ENCODE measurements at regions of chr6 and their contacts with region 1.

Region 1: GRCh38 chr6:36623547-36624459 is 29.6 kb downstream of the SRSF3 start:
- DNase-seq: peak; percentile 51 to 76 (median 69)
- ATAC-seq: peak; percentile 86
- H3K4me3 ChIP-seq: no peak overlapping the region
- H3K4me3 Mint-ChIP-seq: no peak overlapping the region
- H3K27ac ChIP-seq: no peak overlapping the region
- H3K27ac Mint-ChIP-seq: peak overlapping the region in 4 of 9 donors; percentile 3 to 64 (median 26)
- H3K4me1 ChIP-seq: peaks cover 3 to 6% of the 10 kb centered on the region in 2 donors
- H3K4me1 Mint-ChIP-seq: peaks cover 8 to 36% (median 10%) of the 10 kb centered on the region in 7 donors
- H3K27me3 ChIP-seq: no peaks in the 10 kb centered on the region
- H3K27me3 Mint-ChIP-seq: peaks cover 0 to 3% (median 0%) of the 10 kb centered on the region in 5 donors

Region 2: DNA sequence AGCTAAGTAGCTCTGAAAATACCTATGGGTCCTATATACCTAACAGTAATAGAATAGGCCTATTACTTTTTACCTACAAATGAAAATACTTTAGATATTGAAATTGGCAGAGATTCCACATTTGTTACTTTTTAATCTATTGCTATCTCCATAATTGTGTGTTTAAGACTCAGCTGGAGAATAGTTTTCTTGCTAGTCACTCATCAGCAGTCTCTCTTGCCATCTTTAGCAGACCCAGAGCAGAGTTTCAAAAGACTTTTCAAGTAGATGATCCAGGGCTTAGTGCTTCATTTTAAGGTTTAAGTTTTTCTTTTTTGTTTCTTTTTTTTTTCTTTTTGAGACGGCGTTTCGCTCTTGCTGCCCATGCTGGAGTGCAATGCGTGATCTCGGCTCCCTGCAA is 1721.9 kb before region 1 on chr6:
- CTCF ChIA-PET with region 1: no interaction called
- POLR2A ChIA-PET with region 1: no interaction called
- intact Hi-C with region 1: no loop called
- DNase-seq: no peak
- ATAC-seq: no peak
- H3K4me3 ChIP-seq: no peak overlapping the region
- H3K4me3 Mint-ChIP-seq: no peak overlapping the region
- H3K27ac ChIP-seq: no peak overlapping the region
- H3K27ac Mint-ChIP-seq: no peak overlapping the region
- H3K4me1 ChIP-seq: no peaks in the 10 kb centered on the region
- H3K4me1 Mint-ChIP-seq: peaks cover 0 to 16% (median 8%) of the 10 kb centered on the region in 7 donors
- H3K27me3 ChIP-seq: no peaks in the 10 kb centered on the region
- H3K27me3 Mint-ChIP-seq: peaks cover 0 to 17% (median 0%) of the 10 kb centered on the region in 5 donors

Region 3: DNA sequence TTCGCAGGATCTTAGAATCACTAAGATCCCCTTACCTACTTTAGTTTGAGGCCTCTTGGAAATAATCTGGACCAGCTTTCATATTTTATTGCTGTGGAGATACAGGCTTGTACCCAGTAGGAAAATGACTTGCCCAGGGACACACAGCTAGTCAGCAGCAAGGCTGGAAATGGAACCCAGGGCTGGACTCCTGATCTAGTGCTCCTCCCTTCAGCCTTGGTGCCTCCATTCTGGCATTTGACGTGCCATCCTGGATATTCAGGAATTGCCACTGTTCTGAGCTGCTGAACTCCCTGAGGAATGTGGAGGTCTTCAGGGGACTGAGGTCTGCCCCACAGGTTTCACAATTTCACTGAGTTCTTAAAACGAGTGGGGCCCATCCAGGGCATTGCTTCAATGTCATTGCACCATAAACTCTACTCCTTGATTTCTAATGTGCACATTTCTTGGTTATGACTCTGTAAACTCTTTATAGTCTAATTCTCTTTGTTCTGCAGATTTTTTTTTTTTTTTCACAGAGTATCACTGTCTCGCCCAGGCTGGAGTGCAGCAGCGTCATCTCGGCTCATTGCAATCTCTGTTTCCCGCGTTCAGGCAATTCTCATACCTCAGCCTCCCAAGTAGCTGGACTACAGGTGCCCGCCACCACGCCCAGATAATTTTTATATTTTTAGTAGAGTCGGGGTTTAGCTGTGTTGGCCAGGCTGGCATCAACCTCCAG is 28.0 kb after region 1 on chr6:
- CTCF ChIA-PET with region 1: no interaction called
- POLR2A ChIA-PET with region 1: no interaction called
- intact Hi-C with region 1: no loop called
- DNase-seq: no peak
- ATAC-seq: no peak
- H3K4me3 ChIP-seq: no peak overlapping the region
- H3K4me3 Mint-ChIP-seq: no peak overlapping the region
- H3K27ac ChIP-seq: no peak overlapping the region
- H3K27ac Mint-ChIP-seq: no peak overlapping the region
- H3K4me1 ChIP-seq: no peaks in the 10 kb centered on the region
- H3K4me1 Mint-ChIP-seq: peaks cover 0 to 15% (median 0%) of the 10 kb centered on the region in 7 donors
- H3K27me3 ChIP-seq: no peaks in the 10 kb centered on the region
- H3K27me3 Mint-ChIP-seq: peaks cover 4 to 65% (median 14%) of the 10 kb centered on the region in 5 donors

Region 4: DNA sequence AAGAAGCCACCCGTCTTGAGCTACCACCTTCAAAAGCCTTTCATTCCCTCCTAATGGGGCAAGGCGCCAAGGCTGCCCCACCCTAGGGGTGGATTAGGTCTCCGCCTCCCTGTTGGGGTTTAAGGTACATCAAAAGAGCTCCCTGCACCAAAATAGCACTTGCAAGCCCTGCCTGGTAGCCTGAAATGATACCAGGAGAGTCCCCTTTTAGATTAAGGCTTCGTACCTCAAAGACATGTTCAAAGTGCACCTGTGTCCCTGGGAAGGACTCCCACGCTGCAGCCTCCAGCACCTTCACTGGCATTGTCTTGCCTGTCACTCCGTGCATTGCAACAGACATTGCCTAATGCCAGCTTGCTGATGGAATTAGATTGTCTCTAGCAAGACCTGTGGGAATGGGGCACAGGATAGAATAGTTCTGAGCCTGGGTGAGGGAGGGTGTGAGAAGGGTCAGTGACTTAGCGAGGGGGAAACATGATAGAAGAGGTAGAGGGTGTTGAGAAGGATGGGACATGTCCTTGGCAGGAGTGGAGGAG is 39.1 kb after region 1 on chr6:
- CTCF ChIA-PET with region 1: interaction called, 6 read pairs
- POLR2A ChIA-PET with region 1: no interaction called
- intact Hi-C with region 1: loop called in 1 of 2 experiments (anchors 1 kb)
- DNase-seq: peak in 4 of 9 donors; percentile 16 to 50 (median 21)
- ATAC-seq: peak; percentile 49
- H3K4me3 ChIP-seq: no peak overlapping the region
- H3K4me3 Mint-ChIP-seq: peak overlapping the region; percentile 13 to 66 (median 50)
- H3K27ac ChIP-seq: no peak overlapping the region
- H3K27ac Mint-ChIP-seq: peak overlapping the region in 5 of 9 donors; percentile 35 to 80 (median 67)
- H3K4me1 ChIP-seq: peaks cover 0 to 17% of the 10 kb centered on the region in 2 donors
- H3K4me1 Mint-ChIP-seq: peaks cover 0 to 20% (median 16%) of the 10 kb centered on the region in 7 donors
- H3K27me3 ChIP-seq: no peaks in the 10 kb centered on the region
- H3K27me3 Mint-ChIP-seq: peaks cover 10 to 32% (median 12%) of the 10 kb centered on the region in 5 donors

Region 5: GRCh38 chr6:36724514-36725390 is 100.9 kb after region 1 on chr6:
- CTCF ChIA-PET with region 1: no interaction called
- POLR2A ChIA-PET with region 1: no interaction called
- intact Hi-C with region 1: loop called in 1 of 2 experiments (anchors 1 kb)
- DNase-seq: peak in 1 of 9 donors; percentile 58
- ATAC-seq: no peak
- H3K4me3 ChIP-seq: no peak overlapping the region
- H3K4me3 Mint-ChIP-seq: no peak overlapping the region
- H3K27ac ChIP-seq: no peak overlapping the region
- H3K27ac Mint-ChIP-seq: peak overlapping the region in 1 of 9 donors; percentile 8
- H3K4me1 ChIP-seq: peaks cover 0 to 5% of the 10 kb centered on the region in 2 donors
- H3K4me1 Mint-ChIP-seq: peaks cover 7 to 44% (median 11%) of the 10 kb centered on the region in 7 donors
- H3K27me3 ChIP-seq: no peaks in the 10 kb centered on the region
- H3K27me3 Mint-ChIP-seq: no peaks in the 10 kb centered on the region

Region 6: DNA sequence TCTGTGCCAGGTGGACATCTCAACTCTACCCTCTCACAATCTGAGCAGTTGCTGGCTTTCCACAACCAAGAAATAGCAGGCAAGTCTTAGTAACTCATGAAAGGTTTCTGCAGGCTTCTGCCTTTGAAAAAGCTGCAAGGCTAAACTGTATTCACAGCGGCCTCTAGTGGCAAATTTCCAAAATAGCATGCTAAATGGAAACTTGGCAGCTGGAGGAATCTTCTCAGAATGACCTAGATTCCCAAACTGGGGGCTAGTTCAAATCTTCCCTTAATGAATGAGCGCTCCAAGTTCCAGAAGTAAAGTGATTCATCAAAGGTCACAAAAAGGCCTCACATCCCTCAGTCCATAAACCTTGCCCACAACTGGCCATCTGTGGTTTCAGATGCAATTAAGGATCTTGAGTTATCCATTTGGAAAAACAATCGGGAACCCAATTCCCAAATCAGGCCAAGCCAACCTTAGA is 227.4 kb after region 1 on chr6:
- CTCF ChIA-PET with region 1: no interaction called
- POLR2A ChIA-PET with region 1: no interaction called
- intact Hi-C with region 1: loop called in 1 of 2 experiments (anchors 2 kb)
- DNase-seq: peak in 5 of 9 donors; percentile 38 to 54 (median 44)
- ATAC-seq: no peak
- H3K4me3 ChIP-seq: no peak overlapping the region
- H3K4me3 Mint-ChIP-seq: no peak overlapping the region
- H3K27ac ChIP-seq: no peak overlapping the region
- H3K27ac Mint-ChIP-seq: no peak overlapping the region
- H3K4me1 ChIP-seq: no peaks in the 10 kb centered on the region
- H3K4me1 Mint-ChIP-seq: peaks cover 0 to 13% (median 7%) of the 10 kb centered on the region in 7 donors
- H3K27me3 ChIP-seq: no peaks in the 10 kb centered on the region
- H3K27me3 Mint-ChIP-seq: peaks cover 0 to 5% (median 5%) of the 10 kb centered on the region in 5 donors

Measured in naive thymus-derived CD4-positive, alpha-beta T cell (primary cell).